ENCODE measurements at regions of chr3 and their contacts with region 1.

Region 1: DNA sequence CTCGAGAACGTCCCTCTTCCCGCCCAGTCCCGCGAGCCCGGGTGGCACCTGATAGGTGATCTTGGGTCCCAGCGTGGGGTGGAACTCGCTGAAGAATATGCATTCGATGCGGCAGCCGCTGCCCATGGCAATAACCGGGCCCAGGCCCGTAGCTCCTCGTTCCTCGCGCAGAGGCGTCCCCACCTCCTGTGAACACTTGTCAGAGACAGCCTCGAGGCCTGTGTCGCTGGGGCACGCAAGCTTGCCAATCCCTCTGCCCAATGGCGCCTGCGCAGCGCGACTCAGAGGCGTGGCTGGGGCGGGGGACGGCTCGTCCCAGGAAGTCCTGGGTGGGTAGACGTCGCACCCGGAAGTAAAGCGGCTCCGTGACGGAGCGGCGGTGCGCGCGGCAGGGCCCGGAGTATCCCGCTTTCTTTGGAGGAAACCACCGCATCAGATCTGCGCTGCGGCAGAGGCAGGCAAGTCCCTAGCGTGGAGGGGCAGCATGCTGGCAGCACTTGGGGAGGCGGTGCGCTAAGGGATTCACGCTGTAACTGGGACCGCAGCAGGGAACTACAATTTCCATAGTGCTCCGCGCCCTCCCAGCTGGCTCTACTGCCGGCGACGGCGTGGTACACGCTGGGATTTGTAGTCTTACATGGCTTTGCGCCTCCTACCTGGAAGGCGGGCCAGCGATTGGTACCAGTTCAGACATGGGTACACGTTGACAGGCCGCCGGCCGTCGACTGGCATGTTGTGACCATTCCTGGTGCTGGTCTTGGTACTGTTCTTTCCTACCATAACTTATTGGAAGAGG is at the starts of genes CYB561D2 and NPRL2:
- DNase-seq: peak; percentile 72 to 93
- H3K4me3 ChIP-seq: peak within 1 kb of the TSS; percentile 79 to 87 (median 82)
- H3K27ac ChIP-seq: no peak within 1 kb of the TSS
- H3K4me1 ChIP-seq: peaks cover 0 to 11% (median 8%) of the 10 kb centered on the region in 4 experiments; a peak in 5 of 7 replicates
- H3K27me3 ChIP-seq: peaks cover 0 to 4% (median 4%) of the 10 kb centered on the region in 4 experiments; a peak in 4 of 7 replicates
- CTCF ChIP-seq: no peak
- EP300 ChIP-seq: no peak
- POLR2A ChIP-seq: peak in 1 of 2 experiments; percentile 59; a peak in 2 of 3 replicates
- RAD21 ChIP-seq: no peak
- total RNA-seq, gene CYB561D2: 9.8 and 9.9 TPM in 2 replicates
- total RNA-seq, gene NPRL2: 25.0 and 28.4 TPM in 2 replicates

Region 2: GRCh38 chr3:50251220-50251619 is 99.5 kb before region 1 on chr3:
- CTCF ChIA-PET with region 1: no interaction called
- POLR2A ChIA-PET with region 1: no interaction called
- DNase-seq: no peak
- H3K4me3 ChIP-seq: no peak overlapping the region
- H3K27ac ChIP-seq: no peak overlapping the region
- H3K4me1 ChIP-seq: peaks cover 4 to 8% (median 5%) of the 10 kb centered on the region in 4 experiments; a peak in 6 of 7 replicates
- H3K27me3 ChIP-seq: no peaks in the 10 kb centered on the region
- CTCF ChIP-seq: no peak
- EP300 ChIP-seq: no peak
- POLR2A ChIP-seq: no peak
- RAD21 ChIP-seq: no peak

Region 3: DNA sequence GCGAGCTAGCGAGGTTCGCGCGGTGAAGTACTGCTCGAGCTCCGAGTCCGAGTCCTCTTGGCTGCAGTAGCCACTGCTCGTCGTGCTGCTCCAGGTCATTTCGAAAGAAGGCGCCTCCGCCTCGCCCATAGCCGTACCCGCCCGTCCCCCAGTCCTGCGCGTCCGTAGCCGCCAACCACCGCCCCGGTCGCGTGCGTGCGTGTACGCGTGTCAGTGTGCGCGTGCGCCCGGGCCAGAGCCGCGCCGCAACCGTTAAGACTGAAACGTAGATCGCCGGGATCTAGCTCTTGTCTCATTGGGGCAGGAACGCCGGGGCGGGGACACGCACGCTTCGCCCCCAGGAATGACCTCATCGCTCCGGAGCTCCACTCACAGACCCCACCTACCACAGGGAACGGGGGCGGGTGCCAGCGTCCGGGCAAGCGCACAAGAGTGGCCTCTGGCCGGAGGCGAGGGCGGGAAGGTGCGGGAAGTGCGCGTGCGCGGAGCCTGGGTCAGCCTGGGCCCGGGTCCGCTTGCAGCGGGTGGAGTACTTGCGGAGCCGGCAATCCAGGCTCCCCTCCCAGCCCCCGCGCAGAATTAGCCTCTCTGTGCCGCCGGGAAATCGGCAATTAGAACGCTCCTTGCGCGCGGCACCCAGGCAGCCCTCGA is 13.4 kb before region 1 on chr3:
- CTCF ChIA-PET with region 1: interaction called, 21 read pairs
- POLR2A ChIA-PET with region 1: interaction called, 11 read pairs
- DNase-seq: peak; percentile 96 to 99
- H3K4me3 ChIP-seq: peak overlapping the region; percentile 72 to 96 (median 88)
- H3K27ac ChIP-seq: peak overlapping the region; percentile 72; the same call in 1 of the 2 replicates
- H3K4me1 ChIP-seq: peaks cover 0 to 15% (median 14%) of the 10 kb centered on the region in 4 experiments; a peak in 5 of 7 replicates
- H3K27me3 ChIP-seq: peaks cover 20 to 44% (median 37%) of the 10 kb centered on the region in 4 experiments
- CTCF ChIP-seq: no peak
- EP300 ChIP-seq: no peak
- POLR2A ChIP-seq: peak in 1 of 2 experiments; percentile 54; a peak in 2 of 3 replicates
- RAD21 ChIP-seq: no peak

Region 4: DNA sequence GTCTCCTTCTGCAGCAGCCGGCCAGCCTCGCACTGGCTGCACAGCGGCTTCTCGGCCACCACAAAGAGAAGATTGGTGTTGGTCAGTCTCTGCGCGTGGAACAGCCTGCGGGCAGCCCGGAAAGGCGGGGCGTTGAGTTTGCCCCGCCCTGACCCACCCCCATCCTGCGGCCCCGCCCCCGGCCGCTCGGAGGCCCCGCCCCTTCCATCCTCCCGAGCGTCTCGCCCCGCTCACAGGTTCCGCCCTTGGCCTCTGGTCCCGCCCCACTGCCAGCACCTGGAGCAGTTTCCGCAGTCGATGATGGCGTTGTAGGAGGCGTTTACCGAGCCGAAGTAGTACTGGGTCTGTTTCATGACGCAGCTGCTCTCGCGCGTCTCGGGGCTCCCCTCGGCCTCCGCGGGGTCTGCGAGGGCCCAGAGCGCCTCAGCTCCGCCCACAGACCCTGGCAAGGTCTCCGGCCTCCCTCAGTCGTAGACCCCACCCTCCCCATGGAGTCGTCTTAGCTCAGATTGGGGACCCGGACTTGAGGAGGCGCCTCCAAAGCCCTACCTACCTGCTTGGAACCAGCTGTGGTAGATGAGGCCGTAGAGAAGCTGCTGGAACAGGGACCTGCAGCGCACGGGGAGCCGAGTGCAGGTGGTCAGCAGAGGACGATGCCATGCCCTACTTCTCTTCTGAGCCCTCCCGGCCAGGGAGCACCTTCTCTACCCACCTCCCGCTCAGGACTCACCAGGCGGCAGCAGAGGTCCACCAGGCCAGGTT is 14.5 kb after region 1 on chr3:
- CTCF ChIA-PET with region 1: interaction called, 52 read pairs
- POLR2A ChIA-PET with region 1: interaction called, 22 read pairs
- DNase-seq: peak; percentile 78 to 93
- H3K4me3 ChIP-seq: peak overlapping the region; percentile 48 to 68 (median 59)
- H3K27ac ChIP-seq: peak overlapping the region; percentile 39; the same call in 1 of the 2 replicates
- H3K4me1 ChIP-seq: peaks cover 0 to 15% (median 10%) of the 10 kb centered on the region in 4 experiments; a peak in 6 of 7 replicates
- H3K27me3 ChIP-seq: peaks cover 0 to 5% (median 2%) of the 10 kb centered on the region in 4 experiments; a peak in 3 of 7 replicates
- CTCF ChIP-seq: peak in 1 of 3 experiments; percentile 20; a peak in 1 of 4 replicates
- EP300 ChIP-seq: no peak
- POLR2A ChIP-seq: no peak
- RAD21 ChIP-seq: peak; percentile 33 to 49; a peak in 3 of 4 replicates

Region 5: DNA sequence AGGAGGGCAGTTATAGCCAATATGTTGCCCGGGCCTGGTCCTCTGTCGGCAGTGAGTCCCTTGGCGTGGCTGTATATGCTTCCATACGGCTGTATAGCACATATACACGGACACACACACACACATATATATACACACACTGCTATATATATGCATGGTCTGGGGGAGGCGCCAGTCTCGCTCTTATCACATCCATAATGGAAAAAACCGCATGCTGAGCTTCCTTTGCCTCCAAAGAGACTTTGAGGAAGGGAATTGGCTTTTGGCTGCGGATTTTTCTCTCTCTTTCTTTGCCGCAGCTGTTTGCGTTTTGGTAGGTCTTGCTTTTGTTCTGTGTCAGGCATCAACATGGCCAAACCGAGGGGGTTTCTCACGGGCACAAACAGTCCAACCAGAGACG is 19.9 kb after region 1 on chr3:
- CTCF ChIA-PET with region 1: interaction called, 52 read pairs
- POLR2A ChIA-PET with region 1: interaction called, 22 read pairs
- DNase-seq: no peak
- H3K4me3 ChIP-seq: no peak overlapping the region
- H3K27ac ChIP-seq: no peak overlapping the region
- H3K4me1 ChIP-seq: peaks cover 0 to 32% (median 23%) of the 10 kb centered on the region in 4 experiments; a peak in 6 of 7 replicates
- H3K27me3 ChIP-seq: no peaks in the 10 kb centered on the region; a peak in 2 of 7 replicates
- CTCF ChIP-seq: peak in 1 of 3 experiments; percentile 34; a peak in 1 of 4 replicates
- EP300 ChIP-seq: no peak
- POLR2A ChIP-seq: no peak
- RAD21 ChIP-seq: peak; percentile 41 to 44; a peak in 3 of 4 replicates

Region 6: DNA sequence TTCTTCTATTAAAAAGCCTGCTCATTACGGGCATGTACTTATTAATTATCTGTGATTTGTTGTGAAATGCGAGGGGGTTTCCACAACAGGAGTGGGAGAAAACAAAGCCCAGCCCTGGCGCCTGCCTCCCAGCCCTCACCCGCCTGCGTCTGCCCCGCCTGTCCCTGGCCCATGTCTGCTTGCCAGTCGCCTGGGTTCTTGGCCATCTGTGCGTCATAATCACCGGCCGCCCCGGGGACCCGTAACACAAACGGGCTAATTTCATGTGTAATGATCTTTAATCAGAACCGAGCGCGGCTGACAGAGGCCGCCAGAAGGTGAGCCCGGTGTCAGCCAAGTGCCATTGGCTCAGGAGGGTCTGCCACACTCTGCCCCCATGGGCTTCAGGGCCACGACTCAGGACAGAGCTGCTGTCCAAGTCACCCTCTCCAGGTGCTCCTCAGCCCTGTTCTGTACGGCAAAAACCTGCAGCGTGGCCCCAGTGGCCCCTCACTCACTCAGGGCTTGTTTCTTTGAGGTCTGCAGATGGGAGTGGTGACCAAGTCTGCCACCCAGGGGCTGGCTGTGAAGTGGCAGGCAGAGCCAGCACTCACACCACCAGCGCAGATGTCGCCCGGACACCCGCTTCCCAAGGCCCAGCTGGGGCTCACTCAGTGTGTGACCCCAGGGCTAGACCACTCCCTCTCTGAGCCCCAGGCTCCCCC is 37.4 kb after region 1 on chr3:
- CTCF ChIA-PET with region 1: interaction called, 136 read pairs
- POLR2A ChIA-PET with region 1: no interaction called
- DNase-seq: peak in 1 of 2 experiments; percentile 67
- H3K4me3 ChIP-seq: no peak overlapping the region
- H3K27ac ChIP-seq: no peak overlapping the region
- H3K4me1 ChIP-seq: peaks cover 0 to 2% (median under 1%) of the 10 kb centered on the region in 4 experiments; a peak in 3 of 7 replicates
- H3K27me3 ChIP-seq: peaks cover 0 to 3% (median 0%) of the 10 kb centered on the region in 4 experiments; a peak in 1 of 7 replicates
- CTCF ChIP-seq: peak in 2 of 3 experiments; percentile 72 to 77; a peak in 3 of 4 replicates
- EP300 ChIP-seq: no peak
- POLR2A ChIP-seq: no peak
- RAD21 ChIP-seq: peak; percentile 65 to 70

Region 7: DNA sequence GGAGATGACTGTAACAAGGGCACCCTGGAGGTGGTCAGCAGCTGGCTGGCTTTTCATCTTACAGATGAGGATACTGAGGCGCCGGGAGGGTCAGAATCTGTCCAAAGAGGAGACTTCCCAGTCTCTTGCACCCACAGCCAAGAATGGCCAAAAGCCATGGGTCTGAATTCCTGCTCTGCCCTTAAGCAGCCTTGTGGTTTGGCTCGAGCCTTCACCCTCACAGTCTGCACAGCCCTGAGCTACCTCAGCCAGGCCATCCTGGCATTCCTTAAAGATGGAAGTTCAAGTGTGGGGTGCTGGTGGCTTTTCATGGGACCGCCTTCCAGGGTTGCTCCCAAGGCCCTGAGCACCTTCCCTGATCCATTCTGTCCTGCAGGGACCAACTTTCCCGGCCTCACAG is 93.5 kb after region 1 on chr3:
- CTCF ChIA-PET with region 1: no interaction called
- POLR2A ChIA-PET with region 1: no interaction called
- DNase-seq: no peak
- H3K4me3 ChIP-seq: no peak overlapping the region
- H3K27ac ChIP-seq: no peak overlapping the region
- H3K4me1 ChIP-seq: peaks cover 0 to 4% (median 2%) of the 10 kb centered on the region in 4 experiments; a peak in 3 of 7 replicates
- H3K27me3 ChIP-seq: no peaks in the 10 kb centered on the region
- CTCF ChIP-seq: no peak
- EP300 ChIP-seq: no peak
- POLR2A ChIP-seq: no peak
- RAD21 ChIP-seq: no peak

Measured in H1 (cell line).